ENCODE measurements at regions of chr20 and their contacts with region 1.

Region 1: DNA sequence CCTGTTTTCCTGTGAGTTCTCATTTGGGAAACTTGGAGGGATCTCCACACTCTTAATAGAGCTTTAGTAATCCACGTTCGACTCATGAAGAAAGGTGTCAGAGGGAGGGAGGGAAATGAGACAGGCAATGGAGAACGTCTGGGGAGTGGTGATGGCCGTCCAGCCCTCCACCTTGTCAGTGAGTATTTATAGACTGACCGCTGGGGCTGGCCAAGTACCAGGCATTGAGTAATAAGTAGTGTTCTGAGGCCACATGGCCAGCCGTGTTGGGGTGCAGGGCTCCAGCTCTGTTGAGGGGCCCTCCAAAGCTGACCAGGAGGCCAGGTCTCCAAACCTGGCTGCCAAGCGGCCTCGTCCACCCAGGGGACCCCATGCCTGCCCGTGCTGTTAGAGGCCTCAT is 11.3 kb upstream of the DSN1 start:
- DNase-seq: peak in 1 of 2 donors; percentile 49
- ATAC-seq: peak; percentile 69 to 92 (median 86)
- H3K4me3 ChIP-seq: no peak overlapping the region
- H3K27ac ChIP-seq: peak overlapping the region in 8 of 10 donors; percentile 44 to 67 (median 56)
- H3K4me1 ChIP-seq: peaks cover 0 to 17% (median 8%) of the 10 kb centered on the region in 9 donors
- H3K27me3 ChIP-seq: no peaks in the 10 kb centered on the region
- CTCF ChIP-seq: no peak

Region 2: DNA sequence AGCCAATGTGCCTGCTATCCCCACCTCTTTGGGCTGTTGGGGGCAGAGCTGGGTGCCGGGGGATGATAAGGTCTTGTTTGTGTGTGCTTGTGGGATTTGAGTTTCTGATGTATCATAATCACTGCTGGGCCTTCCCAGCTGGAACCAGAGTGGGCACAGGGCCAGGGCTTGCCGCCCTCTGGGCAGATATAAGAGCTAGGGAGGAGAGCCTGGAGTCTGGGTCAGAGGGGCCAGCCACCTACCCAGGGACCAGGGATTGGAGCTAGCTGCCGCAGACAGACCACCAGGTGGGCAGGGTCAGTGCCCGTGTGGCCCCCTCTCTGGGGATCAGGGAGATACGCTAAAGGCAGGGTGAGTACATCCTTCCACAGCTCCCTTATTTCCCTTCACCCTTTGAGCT is 88.0 kb after region 1 on chr20:
- intact Hi-C with region 1: loop called in 1 of 10 experiments (anchors 10 kb)
- DNase-seq: peak in 1 of 2 donors; percentile 34
- ATAC-seq: peak in 3 of 8 donors; percentile 36 to 42 (median 37)
- H3K4me3 ChIP-seq: no peak overlapping the region
- H3K27ac ChIP-seq: no peak overlapping the region
- H3K4me1 ChIP-seq: peaks cover 0 to 18% (median 6%) of the 10 kb centered on the region in 9 donors
- H3K27me3 ChIP-seq: no peaks in the 10 kb centered on the region
- CTCF ChIP-seq: no peak

Measured in heart right ventricle (tissue), 16 donors.